Heart right ventricle (tissue), 16 donors: ENCODE measurements at regions of chr2 and their contacts with region 1.

Region 1: DNA sequence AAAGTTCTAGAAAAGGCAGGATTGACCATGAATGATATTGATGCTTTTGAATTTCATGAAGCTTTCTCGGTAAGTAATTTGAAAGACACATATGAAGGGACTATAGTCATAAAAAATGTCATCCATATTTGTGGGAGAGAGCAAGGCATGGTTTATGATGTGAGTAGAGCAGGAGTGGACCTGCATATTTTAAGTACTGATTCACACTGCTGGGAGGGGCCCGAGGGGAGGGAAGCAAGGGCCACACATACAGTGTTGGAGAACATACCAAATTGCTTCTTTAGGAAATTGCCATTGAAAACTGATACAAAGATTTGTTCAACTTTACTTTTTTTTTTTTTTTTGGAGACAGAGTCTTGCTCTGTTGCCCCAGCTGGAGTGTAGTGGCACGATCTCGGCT is 39.4 kb downstream of the HADHB start:
- DNase-seq: no peak
- ATAC-seq: no peak
- H3K4me3 ChIP-seq: no peak overlapping the region
- H3K27ac ChIP-seq: no peak overlapping the region
- H3K4me1 ChIP-seq: no peaks in the 10 kb centered on the region
- H3K27me3 ChIP-seq: no peaks in the 10 kb centered on the region
- CTCF ChIP-seq: no peak

Region 2: GRCh38 chr2:26202981-26203490 is 81.1 kb before region 1 on chr2:
- intact Hi-C with region 1: loop called in 1 of 10 experiments (anchors 10 kb)
- DNase-seq: no peak
- ATAC-seq: no peak
- H3K4me3 ChIP-seq: no peak overlapping the region
- H3K27ac ChIP-seq: no peak overlapping the region
- H3K4me1 ChIP-seq: no peaks in the 10 kb centered on the region
- H3K27me3 ChIP-seq: no peaks in the 10 kb centered on the region
- CTCF ChIP-seq: no peak

Region 3: DNA sequence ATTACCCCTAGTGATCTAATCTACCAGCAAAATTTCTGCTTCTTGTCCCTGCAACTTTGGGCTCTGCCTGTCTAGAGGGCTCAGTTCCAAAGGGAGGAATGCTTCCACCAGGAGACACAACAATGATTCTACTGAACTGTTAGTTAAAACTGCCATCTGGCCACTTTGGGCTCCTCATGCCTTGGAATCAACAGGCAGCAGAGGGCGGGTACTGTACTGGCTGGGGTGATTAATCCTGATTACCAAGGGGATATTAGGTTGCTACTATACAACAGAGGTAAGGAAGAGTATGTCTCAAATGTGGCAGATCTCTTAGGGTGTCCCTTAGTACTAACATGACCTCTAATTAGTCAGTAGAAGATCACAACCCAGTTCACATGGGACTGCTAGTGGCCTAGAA is 61.1 kb before region 1 on chr2:
- intact Hi-C with region 1: loop called in 1 of 10 experiments (anchors 5 kb)
- DNase-seq: no peak
- ATAC-seq: peak in 2 of 8 donors; percentile 34 to 37
- H3K4me3 ChIP-seq: no peak overlapping the region
- H3K27ac ChIP-seq: peak overlapping the region in 1 of 10 donors; percentile 25
- H3K4me1 ChIP-seq: peaks cover 0 to 4% (median 0%) of the 10 kb centered on the region in 9 donors
- H3K27me3 ChIP-seq: no peaks in the 10 kb centered on the region
- CTCF ChIP-seq: no peak

Region 4: DNA sequence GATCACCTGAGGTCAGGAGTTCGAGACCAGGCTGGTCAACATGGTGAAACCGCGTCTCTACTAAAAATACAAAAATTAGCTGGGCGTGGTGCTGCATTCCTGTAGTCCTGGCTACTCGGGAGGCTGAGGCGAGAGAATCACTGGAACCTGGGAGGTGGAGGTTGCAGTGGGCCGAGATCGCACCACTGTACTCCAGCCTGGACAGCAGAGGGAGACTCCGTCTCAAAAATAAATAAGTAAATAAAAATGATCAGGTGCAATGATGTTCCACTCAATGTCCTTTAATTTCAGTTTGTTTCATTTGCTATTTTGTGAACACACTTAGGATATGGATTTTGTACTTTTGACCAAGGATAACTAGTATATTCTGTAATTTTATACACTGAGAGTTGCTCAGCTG is 49.1 kb before region 1 on chr2:
- intact Hi-C with region 1: loop called in 5 of 10 experiments (anchors 5 to 10 kb)
- DNase-seq: no peak
- ATAC-seq: no peak
- H3K4me3 ChIP-seq: no peak overlapping the region
- H3K27ac ChIP-seq: no peak overlapping the region
- H3K4me1 ChIP-seq: peaks cover 0 to 30% (median 22%) of the 10 kb centered on the region in 9 donors
- H3K27me3 ChIP-seq: no peaks in the 10 kb centered on the region
- CTCF ChIP-seq: peak in 6 of 9 donors; percentile 28 to 44 (median 40)

Region 5: DNA sequence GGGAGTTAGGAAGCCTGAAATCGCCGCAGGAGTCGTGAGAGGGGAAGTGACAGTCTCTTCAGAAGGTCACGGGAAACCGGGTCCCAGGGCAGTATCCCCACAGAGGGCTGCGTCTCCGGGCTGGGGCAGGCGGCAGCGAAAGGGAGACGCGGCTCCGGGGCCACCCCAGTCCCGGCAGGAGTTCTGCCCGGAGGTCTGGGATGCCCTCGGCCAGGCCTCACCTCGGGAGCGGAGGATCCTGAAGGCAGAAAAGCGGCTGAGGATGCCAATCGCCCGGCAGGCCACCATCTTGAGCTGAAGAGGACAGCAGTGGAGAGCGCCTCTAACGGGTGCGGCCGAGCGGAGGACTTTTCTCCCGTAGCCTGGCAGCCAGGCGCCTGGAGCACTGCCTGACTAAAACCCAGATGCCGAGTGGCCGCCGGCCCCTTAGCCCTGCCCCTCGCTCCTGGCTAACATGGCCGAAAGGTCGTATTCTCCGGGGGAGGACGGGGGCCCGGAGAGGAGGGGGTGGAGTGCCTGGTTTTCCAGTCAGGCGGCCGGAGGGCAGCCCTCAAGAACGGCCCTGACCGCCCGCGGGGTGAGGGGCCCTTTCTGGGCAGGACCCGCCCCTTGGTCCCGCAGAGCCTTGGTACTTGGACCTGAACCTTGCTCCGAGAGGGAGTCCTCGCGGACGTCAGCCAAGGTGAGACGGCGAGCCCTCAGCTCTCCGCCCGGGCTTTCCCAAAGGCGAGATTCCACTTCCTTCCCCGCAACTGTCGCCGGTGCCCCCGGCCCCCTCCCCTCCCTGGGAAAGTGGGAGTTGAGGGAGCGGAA is 39.6 kb before region 1 on chr2 and contains the starts of genes HADHA and HADHB:
- intact Hi-C with region 1: loop called in 5 of 10 experiments (anchors 5 to 10 kb)
- DNase-seq: peak; percentile 90
- ATAC-seq: peak; percentile 92 to 97 (median 95)
- H3K4me3 ChIP-seq: peak within 1 kb of the TSS; percentile 58 to 97 (median 82)
- H3K27ac ChIP-seq: peak within 1 kb of the TSS; percentile 93 to 99 (median 98)
- H3K4me1 ChIP-seq: peaks cover 4 to 79% (median 67%) of the 10 kb centered on the region in 9 donors
- H3K27me3 ChIP-seq: no peaks in the 10 kb centered on the region
- CTCF ChIP-seq: peak in 5 of 9 donors; percentile 8 to 52 (median 47)
- total RNA-seq, gene HADHA: 298 to 686 (median 410) TPM
- total RNA-seq, gene HADHB: 740 to 1,542 (median 874) TPM

Region 6: GRCh38 chr2:26394694-26395093 is 110.6 kb after region 1 on chr2:
- intact Hi-C with region 1: no loop called
- DNase-seq: no peak
- ATAC-seq: no peak
- H3K4me3 ChIP-seq: no peak overlapping the region
- H3K27ac ChIP-seq: no peak overlapping the region
- H3K4me1 ChIP-seq: no peaks in the 10 kb centered on the region
- H3K27me3 ChIP-seq: no peaks in the 10 kb centered on the region
- CTCF ChIP-seq: no peak